ENCODE measurements at regions of chr7 and their contacts with region 1.

Region 1: GRCh38 chr7:24685708-24686107 is 71.6 kb downstream of the GSDME start:
- DNase-seq: no peak
- H3K4me3 Mint-ChIP-seq: no peak overlapping the region
- H3K27ac Mint-ChIP-seq: no peak overlapping the region
- H3K4me1 Mint-ChIP-seq: peaks cover 2% of the 10 kb centered on the region
- H3K27me3 Mint-ChIP-seq: no peaks in the 10 kb centered on the region

Region 2: DNA sequence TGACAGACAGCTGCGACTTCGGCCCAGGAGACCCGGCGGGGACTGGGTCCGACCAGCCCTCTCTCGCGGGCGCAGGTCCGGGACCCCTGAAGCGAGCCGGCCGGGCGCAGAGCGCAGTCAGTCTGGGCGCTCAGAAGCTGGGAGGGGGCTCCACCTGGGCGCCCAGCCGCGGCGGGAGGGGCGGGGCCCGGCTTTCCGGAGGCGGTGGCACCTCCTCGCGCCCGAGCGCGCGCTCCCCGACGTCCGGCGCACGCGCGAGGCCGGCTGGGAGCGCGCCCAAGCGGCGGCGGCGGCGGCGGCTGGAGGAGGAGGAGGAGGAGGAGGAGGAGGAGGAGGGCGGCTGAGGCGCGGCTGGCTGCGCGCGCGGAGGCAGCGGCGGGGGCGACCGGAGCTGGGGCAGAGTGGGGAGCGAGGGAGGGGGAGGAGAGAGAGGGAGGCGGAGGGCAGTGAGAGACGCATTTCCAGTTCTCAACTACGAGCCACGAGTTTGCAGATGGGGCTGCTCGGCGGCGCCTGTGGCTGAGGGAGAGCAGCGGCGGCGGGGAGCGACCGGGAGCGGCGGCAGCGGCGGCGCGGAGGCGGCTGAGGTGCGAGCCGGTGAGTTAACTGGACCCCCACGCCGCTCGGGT is 112.6 kb before region 1 on chr7 and contains the start of gene PALS2:
- intact Hi-C with region 1: no loop called
- DNase-seq: peak; percentile 94
- H3K4me3 Mint-ChIP-seq: peak within 1 kb of the TSS; percentile 99
- H3K27ac Mint-ChIP-seq: peak within 1 kb of the TSS; percentile 89
- H3K4me1 Mint-ChIP-seq: peaks cover 32% of the 10 kb centered on the region
- H3K27me3 Mint-ChIP-seq: peaks cover 47% of the 10 kb centered on the region
- total RNA-seq, gene PALS2: 38.5 and 39.5 TPM in 2 replicates

Region 3: GRCh38 chr7:24705461-24705954 is 19.8 kb after region 1 on chr7:
- intact Hi-C with region 1: loop called (anchors 2 kb)
- DNase-seq: no peak
- H3K4me3 Mint-ChIP-seq: no peak overlapping the region
- H3K27ac Mint-ChIP-seq: no peak overlapping the region
- H3K4me1 Mint-ChIP-seq: peaks cover 7% of the 10 kb centered on the region
- H3K27me3 Mint-ChIP-seq: no peaks in the 10 kb centered on the region

Measured in activated CD4-positive, alpha-beta T cell treated with anti-CD3 and anti-CD28 coated beads, Interleukin-2, amount 10 ng/mL, durations not matched to agents 24 days and 14 days (primary cell).